MCF 10A (cell line): ENCODE measurements at regions of chr4 and their contacts with region 1.

Region 1: GRCh38 chr4:122716825-122717448 is 15.6 kb upstream of the BBS12 start:
- DNase-seq: peak; percentile 84
- H3K4me3 Mint-ChIP-seq: no peak overlapping the region
- H3K27ac Mint-ChIP-seq: no peak overlapping the region
- H3K4me1 Mint-ChIP-seq: peaks cover 6% of the 10 kb centered on the region
- H3K27me3 Mint-ChIP-seq: no peaks in the 10 kb centered on the region
- CTCF ChIP-seq: peak; percentile 75

Region 2: GRCh38 chr4:122658818-122659295 is 58.1 kb before region 1 on chr4:
- CTCF ChIA-PET with region 1: interaction called, 11 read pairs
- POLR2A ChIA-PET with region 1: no interaction called
- intact Hi-C with region 1: no loop called
- DNase-seq: no peak
- H3K4me3 Mint-ChIP-seq: no peak overlapping the region
- H3K27ac Mint-ChIP-seq: no peak overlapping the region
- H3K4me1 Mint-ChIP-seq: peaks cover 3% of the 10 kb centered on the region
- H3K27me3 Mint-ChIP-seq: no peaks in the 10 kb centered on the region
- CTCF ChIP-seq: no peak

Region 3: DNA sequence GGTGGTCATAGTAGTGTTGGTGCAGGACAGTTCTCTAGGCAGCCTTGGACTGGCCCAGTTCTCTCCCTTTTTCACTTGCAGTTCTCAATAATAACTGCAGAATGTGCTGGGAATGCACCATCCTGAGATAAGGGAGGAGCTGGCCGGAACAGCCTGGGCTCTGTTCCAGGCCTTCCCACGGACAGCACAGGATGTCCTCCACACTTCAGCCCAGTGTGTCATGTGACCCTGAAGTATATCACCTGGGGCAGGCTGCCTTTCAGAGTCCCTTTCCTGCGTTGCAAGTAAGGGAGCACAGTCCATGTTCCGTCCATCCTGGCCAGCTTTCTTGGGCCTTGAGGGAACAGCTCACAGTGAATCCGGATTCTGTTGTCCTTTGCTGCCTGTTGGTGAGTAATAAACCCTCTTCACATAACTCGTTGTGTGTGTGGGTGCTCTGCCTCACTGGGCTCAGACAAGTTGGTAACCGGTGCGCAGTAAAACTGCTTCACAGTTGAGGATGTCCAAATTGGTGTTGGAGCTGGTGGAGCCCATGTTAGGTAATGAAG is 16.7 kb before region 1 on chr4:
- CTCF ChIA-PET with region 1: interaction called, 34 read pairs
- POLR2A ChIA-PET with region 1: interaction called, 6 read pairs
- intact Hi-C with region 1: no loop called
- DNase-seq: peak; percentile 86
- H3K4me3 Mint-ChIP-seq: peak overlapping the region; percentile 75
- H3K27ac Mint-ChIP-seq: peak overlapping the region; percentile 30
- H3K4me1 Mint-ChIP-seq: peaks cover 25% of the 10 kb centered on the region
- H3K27me3 Mint-ChIP-seq: no peaks in the 10 kb centered on the region
- CTCF ChIP-seq: no peak

Region 4: DNA sequence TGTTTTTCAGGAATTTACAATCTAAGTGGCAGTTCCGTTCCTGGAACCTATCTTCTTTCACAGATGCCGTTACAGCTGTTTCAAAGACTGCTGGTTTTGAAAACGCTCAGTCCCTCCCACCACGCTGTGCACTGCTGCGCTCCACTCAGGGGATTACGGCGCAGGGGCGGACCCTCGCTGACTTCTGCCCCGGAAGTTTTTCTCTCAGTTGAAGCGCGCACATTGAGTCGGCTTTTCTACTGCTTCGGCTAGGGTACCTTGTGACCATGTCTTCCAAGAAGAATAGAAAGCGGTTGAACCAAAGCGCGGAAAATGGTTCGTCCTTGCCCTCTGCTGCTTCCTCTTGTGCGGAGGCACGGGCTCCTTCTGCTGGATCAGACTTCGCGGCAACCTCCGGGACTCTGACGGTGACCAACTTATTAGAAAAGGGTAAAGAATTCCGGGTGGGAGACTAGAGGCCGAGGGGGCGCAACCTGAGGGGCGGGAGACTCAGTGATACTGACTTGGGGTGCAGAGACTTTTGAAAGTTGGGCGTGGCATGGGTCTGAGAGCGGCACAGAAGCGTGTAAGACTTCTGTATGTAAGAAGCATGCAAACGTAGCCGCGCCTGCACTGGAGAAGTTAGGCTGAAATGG is 206.1 kb after region 1 on chr4:
- CTCF ChIA-PET with region 1: interaction called, 8 read pairs
- POLR2A ChIA-PET with region 1: interaction called, 4 read pairs
- intact Hi-C with region 1: loop called (anchors 5 kb)
- DNase-seq: peak; percentile 86
- H3K4me3 Mint-ChIP-seq: no peak overlapping the region
- H3K27ac Mint-ChIP-seq: peak overlapping the region; percentile 74
- H3K4me1 Mint-ChIP-seq: peaks cover 5% of the 10 kb centered on the region
- H3K27me3 Mint-ChIP-seq: no peaks in the 10 kb centered on the region
- CTCF ChIP-seq: no peak

Region 5: GRCh38 chr4:122930862-122931261 is 213.9 kb after region 1 on chr4:
- CTCF ChIA-PET with region 1: interaction called, 10 read pairs
- POLR2A ChIA-PET with region 1: no interaction called
- intact Hi-C with region 1: no loop called
- DNase-seq: peak; percentile 13
- H3K4me3 Mint-ChIP-seq: no peak overlapping the region
- H3K27ac Mint-ChIP-seq: no peak overlapping the region
- H3K4me1 Mint-ChIP-seq: no peaks in the 10 kb centered on the region
- H3K27me3 Mint-ChIP-seq: no peaks in the 10 kb centered on the region
- CTCF ChIP-seq: peak; percentile 51